CD8-positive, alpha-beta T cell (primary cell): ENCODE measurements at regions of chr14 and their contacts with region 1.

Region 1: DNA sequence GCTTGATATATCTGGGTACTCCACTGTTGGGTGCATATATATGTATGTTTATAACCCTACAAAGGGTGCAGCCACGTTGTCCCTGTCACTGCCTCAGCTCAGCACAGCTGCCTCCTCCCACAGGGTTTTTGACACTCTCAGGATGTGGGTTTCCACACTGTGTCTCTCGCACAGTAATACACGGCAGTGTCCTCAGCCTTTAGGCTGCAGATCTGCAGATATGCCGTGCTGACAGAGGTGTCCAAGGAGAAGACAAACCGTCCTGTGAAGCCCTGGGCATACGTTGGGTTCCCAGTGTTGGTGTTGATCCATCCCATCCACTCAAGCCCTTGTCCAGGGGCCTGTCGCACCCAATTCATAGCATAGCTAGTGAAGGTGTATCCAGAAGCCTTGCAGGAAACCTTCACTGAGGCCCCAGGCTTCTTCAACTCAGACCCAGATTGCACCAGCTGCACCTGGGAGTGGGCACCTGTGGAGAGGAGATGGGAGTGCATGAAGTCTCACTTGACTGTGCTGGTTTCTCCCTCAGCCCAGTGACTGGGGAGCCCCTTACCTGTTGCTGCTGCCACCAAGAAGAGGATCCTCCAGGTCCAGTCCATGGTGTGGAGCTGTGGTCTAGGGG is 498.7 kb downstream of the TMEM121 start:
- DNase-seq: peak in 8 of 9 experiments; percentile 26 to 72 (median 39)
- ATAC-seq: peak; percentile 94
- H3K4me3 ChIP-seq: no peak overlapping the region
- H3K4me3 Mint-ChIP-seq: no peak overlapping the region
- H3K27ac ChIP-seq: no peak overlapping the region
- H3K27ac Mint-ChIP-seq: peak overlapping the region; percentile 60
- H3K4me1 ChIP-seq: peaks cover 13% of the 10 kb centered on the region
- H3K4me1 Mint-ChIP-seq: peaks cover 17% of the 10 kb centered on the region
- H3K27me3 ChIP-seq: peaks cover 0 to 2% of the 10 kb centered on the region in 2 experiments
- H3K27me3 Mint-ChIP-seq: peaks cover 4% of the 10 kb centered on the region
- CTCF ChIP-seq: no peak

Region 2: DNA sequence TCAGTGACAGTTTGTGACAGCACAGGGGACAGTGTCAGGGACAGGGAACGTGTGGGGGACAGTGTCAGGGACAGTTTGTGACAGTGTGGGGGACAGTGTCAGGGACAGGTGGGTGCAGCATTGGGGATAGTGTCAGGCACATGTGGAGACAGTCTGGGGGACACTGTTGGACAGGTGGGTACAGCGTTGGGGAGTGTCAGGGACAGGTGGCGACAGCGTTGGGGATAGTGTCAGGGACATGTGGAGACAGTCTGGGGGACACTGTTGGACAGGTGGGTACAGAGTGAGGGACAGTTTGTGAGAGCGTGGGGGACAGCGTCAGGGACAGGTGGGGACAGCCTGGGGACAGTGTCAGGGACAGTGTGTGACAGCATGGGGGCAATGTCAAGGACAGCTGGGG is 358.7 kb before region 1 on chr14:
- CTCF ChIA-PET with region 1: no interaction called
- POLR2A ChIA-PET with region 1: no interaction called
- intact Hi-C with region 1: loop called in 1 of 2 experiments (anchors 10 kb)
- DNase-seq: no peak
- ATAC-seq: no peak
- H3K4me3 ChIP-seq: no peak overlapping the region
- H3K4me3 Mint-ChIP-seq: no peak overlapping the region
- H3K27ac ChIP-seq: no peak overlapping the region
- H3K27ac Mint-ChIP-seq: no peak overlapping the region
- H3K4me1 ChIP-seq: no peaks in the 10 kb centered on the region
- H3K4me1 Mint-ChIP-seq: no peaks in the 10 kb centered on the region
- H3K27me3 ChIP-seq: no peaks in the 10 kb centered on the region
- H3K27me3 Mint-ChIP-seq: no peaks in the 10 kb centered on the region
- CTCF ChIP-seq: no peak